ENCODE measurements at regions of chr17 and their contacts with region 1.

Region 1: GRCh38 chr17:1716076-1716995 is 6.2 kb upstream of the TLCD2 start:
- DNase-seq: peak; percentile 100
- H3K4me3 ChIP-seq: peak overlapping the region; percentile 99
- H3K27ac ChIP-seq: peak overlapping the region; percentile 100
- H3K4me1 ChIP-seq: peaks cover 11 to 37% of the 10 kb centered on the region in 2 donors
- H3K27me3 ChIP-seq: no peaks in the 10 kb centered on the region
- CTCF ChIP-seq: peak in 2 of 3 experiments; percentile 5 to 26

Region 2: GRCh38 chr17:1488030-1488863 is 228.1 kb before region 1 on chr17:
- intact Hi-C with region 1: loop called (anchors 10 kb)
- DNase-seq: peak; percentile 33 to 95
- H3K4me3 ChIP-seq: peak overlapping the region; percentile 93 to 95
- H3K27ac ChIP-seq: peak overlapping the region; percentile 90 to 99
- H3K4me1 ChIP-seq: peaks cover 16 to 55% of the 10 kb centered on the region in 2 donors
- H3K27me3 ChIP-seq: no peaks in the 10 kb centered on the region
- CTCF ChIP-seq: peak in 1 of 3 experiments; percentile 5

Region 3: GRCh38 chr17:1573916-1574696 is 142.2 kb before region 1 on chr17:
- intact Hi-C with region 1: loop called (anchors 5 kb)
- DNase-seq: peak in 1 of 2 donors; percentile 94
- H3K4me3 ChIP-seq: no peak overlapping the region
- H3K27ac ChIP-seq: peak overlapping the region; percentile 22 to 26
- H3K4me1 ChIP-seq: peaks cover 17 to 23% of the 10 kb centered on the region in 2 donors
- H3K27me3 ChIP-seq: no peaks in the 10 kb centered on the region
- CTCF ChIP-seq: peak; percentile 95 to 99 (median 98)

Region 4: DNA sequence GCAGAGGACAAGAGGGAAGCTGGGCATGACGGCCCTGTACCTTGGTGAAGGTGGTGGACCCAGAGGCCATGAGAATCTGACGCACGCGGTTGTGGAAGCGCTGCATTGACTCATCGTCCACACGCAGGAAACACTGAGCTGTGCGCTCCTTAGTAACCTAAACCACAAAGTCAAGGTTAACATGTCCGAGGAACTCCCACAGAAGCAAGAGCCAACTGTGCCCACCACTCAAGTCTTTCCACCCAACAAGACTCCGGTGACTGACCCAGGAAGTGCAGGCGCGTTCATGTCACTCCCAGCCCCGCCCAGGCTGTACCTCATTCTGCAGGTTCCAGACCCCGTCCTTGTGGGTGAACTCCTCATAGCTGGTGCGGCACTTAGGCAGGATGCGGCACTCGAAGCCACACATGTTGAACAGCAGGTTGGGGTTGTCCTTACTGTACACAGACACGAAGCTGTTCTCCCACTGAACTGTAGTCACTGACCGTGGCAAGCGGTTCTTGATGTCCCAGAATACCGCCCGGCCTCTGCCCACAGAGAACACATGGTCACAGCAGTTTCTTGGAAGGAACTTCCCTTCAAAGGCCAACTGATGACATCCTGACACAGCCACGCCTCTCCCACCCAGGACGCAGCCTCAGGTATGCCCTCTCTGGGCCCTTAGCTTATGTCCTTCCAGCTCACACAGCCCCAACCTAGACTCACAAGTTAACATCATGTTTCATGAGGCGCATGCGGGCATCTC is 43.1 kb before region 1 on chr17:
- intact Hi-C with region 1: loop called (anchors 5 kb)
- DNase-seq: no peak
- H3K4me3 ChIP-seq: no peak overlapping the region
- H3K27ac ChIP-seq: no peak overlapping the region
- H3K4me1 ChIP-seq: peaks cover 0 to 6% of the 10 kb centered on the region in 2 donors
- H3K27me3 ChIP-seq: no peaks in the 10 kb centered on the region
- CTCF ChIP-seq: no peak

Region 5: DNA sequence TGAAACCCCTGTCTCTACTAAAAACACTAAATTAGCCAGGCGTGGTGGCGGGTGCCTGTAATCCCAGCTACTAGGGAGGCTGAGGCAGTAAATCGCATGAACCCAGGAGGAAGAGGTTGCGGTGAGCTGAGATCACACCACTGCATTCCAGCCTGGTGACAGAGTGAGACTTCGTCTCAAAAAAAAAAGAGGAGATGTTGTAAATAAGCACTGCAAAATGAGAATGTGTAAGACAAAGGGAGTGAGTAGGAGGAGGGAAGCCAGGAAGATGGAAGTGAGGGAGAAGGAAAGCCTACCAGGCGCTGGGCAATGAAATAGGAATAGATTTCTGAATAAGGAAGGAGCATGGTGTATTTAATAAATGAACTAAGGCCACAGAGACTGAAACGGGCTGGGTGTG is 23.0 kb before region 1 on chr17:
- intact Hi-C with region 1: no loop called
- DNase-seq: no peak
- H3K4me3 ChIP-seq: no peak overlapping the region
- H3K27ac ChIP-seq: no peak overlapping the region
- H3K4me1 ChIP-seq: peaks cover 0 to 6% of the 10 kb centered on the region in 2 donors
- H3K27me3 ChIP-seq: no peaks in the 10 kb centered on the region
- CTCF ChIP-seq: no peak

Region 6: DNA sequence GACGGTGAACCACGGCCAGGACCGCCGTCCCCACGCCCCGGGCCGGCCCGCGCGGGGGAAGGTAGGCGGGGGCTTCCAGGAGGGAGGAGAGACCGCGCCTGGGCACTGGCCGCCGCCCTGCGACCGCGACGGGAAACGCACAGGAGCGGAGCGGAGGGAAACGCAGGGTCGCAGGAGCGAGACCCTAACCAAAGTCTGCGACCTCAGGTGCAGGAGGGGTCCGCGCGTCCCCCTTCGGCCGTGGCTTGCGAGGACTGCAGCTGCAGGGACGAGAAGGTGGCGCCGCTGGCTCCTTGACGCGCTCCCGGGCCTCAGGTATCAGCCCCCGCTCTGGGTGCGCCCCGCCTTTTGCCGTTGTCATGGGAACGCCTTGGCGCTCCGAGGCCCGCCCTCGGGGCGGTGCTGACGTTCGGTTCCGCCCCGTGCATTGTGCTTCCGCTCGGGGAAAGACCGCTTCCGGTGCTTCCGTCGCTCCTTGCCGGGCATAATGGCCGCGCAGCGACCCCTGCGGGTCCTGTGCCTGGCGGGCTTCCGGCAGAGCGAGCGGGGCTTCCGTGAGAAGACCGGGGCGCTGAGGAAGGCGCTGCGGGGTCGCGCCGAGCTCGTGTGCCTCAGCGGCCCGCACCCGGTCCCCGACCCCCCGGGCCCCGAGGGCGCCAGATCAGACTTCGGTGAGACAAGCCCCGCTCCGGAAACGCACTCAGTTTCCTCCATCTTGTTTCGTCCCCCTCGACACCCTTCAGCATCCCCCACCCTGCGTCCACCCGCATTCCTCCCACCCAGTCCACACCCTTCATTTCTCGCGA is 325.4 kb after region 1 on chr17 and contains the start of gene OVCA2:
- intact Hi-C with region 1: loop called (anchors 5 kb)
- DNase-seq: peak; percentile 71 to 96
- H3K4me3 ChIP-seq: peak within 1 kb of the TSS; percentile 74 to 76
- H3K27ac ChIP-seq: peak within 1 kb of the TSS; percentile 81 to 90
- H3K4me1 ChIP-seq: peaks cover 4 to 17% of the 10 kb centered on the region in 2 donors
- H3K27me3 ChIP-seq: no peaks in the 10 kb centered on the region
- CTCF ChIP-seq: peak; percentile 47 to 61 (median 60)
- total RNA-seq, gene OVCA2: 71.3 TPM